Vagina (tissue), 2 donors: ENCODE measurements at regions of chr2 and their contacts with region 1.

Region 1: DNA sequence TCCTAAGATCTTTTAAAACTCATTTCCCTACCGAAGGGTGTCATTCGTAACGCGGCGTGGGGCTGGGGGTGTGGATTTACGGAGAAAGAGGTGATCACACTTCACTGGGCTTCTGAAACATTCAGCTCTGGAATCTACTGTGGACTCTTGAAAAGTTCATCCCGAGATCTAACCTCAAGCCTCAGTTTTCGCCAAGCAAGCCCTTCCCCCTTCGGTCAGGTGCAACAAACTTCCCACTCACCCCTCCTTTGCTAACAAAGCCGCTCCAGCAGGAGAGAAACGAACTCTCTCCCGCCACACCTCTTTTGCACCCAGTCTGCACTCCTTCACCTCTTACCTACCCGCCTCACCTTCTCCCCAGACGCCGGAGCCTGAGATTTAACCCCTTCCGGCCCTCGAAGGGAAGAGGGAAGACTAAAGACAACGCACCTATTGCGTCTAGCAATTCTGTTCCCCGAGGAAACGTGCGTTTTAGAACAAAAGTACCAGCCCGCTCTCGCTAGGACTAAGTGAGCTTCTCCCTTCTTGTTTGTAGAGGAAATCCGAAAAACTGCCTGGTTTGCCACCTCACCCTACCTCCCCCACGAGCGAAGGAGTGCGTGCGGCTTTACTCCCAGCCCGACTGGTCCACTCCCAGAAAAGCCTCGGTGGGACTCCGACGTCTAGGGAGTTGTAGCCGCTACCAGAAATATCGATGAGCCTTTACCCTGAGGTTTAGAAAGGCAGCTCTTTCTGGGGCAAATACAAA is 538 bp upstream of the PEX13 start:
- DNase-seq: peak; percentile 92 to 96
- H3K4me3 ChIP-seq: peak overlapping the region; percentile 63 to 94
- H3K27ac ChIP-seq: peak overlapping the region; percentile 91
- H3K4me1 ChIP-seq: peaks cover 52% of the 10 kb centered on the region
- H3K27me3 ChIP-seq: no peaks in the 10 kb centered on the region
- CTCF ChIP-seq: no peak
- POLR2A ChIP-seq: no peak

Region 2: GRCh38 chr2:61065715-61066709 is 49.0 kb after region 1 on chr2 and contains the start of gene SANBR:
- intact Hi-C with region 1: loop called (anchors 5 kb)
- DNase-seq: peak; percentile 90 to 96
- H3K4me3 ChIP-seq: peak within 1 kb of the TSS; percentile 75 to 83
- H3K27ac ChIP-seq: peak within 1 kb of the TSS; percentile 83
- H3K4me1 ChIP-seq: no peaks in the 10 kb centered on the region
- H3K27me3 ChIP-seq: no peaks in the 10 kb centered on the region
- CTCF ChIP-seq: peak in 1 of 3 experiments; percentile 38
- POLR2A ChIP-seq: peak in 1 of 2 donors; percentile 13
- total RNA-seq, gene SANBR: 7.9 TPM